ENCODE measurements at regions of chr7 and their contacts with region 1.

Region 1: DNA sequence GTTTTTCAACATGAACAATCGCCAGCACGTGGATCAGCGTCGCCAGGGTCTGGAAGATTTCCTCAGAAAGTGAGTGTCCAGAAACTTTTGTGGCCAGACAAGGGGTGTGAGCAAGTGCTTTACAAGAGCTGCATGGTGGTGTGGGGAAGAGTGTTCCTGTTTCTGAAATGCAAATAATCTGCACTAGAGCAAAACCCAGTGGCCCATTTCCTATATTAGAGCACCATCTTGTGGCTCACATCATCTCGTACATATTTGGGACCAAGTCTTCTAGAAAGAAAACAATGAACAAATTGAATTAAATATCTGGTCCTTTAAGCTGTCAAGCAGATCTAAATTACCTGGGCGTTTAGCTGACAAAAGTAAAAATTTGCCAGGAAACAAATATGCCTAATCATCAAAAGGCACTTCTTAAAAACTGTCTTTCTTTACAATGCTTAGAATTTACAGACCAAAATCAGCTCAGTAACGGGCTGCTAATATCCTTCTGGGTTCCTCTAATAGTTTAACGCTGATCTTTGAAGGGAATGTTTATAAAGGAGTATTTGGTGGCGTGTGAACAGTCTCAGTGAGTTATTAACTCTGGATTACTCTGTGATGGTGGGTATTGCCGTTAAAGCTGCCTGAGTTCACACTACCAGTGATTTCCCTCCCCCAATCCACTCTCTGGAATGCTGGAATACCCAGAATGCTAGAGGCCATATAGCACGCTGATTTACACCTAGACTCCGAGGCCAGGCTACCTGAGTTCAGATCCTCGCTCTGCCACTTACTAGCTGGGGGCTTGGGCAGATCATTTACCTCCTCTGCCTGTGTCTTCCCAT is 73.6 kb downstream of the SNX10 start:
- ATAC-seq: peak; percentile 72 to 93 (median 80)
- H3K4me3 ChIP-seq: no peak overlapping the region
- H3K27ac ChIP-seq: no peak overlapping the region
- H3K4me1 ChIP-seq: peaks cover 7 to 25% of the 10 kb centered on the region in 2 donors

Region 2: DNA sequence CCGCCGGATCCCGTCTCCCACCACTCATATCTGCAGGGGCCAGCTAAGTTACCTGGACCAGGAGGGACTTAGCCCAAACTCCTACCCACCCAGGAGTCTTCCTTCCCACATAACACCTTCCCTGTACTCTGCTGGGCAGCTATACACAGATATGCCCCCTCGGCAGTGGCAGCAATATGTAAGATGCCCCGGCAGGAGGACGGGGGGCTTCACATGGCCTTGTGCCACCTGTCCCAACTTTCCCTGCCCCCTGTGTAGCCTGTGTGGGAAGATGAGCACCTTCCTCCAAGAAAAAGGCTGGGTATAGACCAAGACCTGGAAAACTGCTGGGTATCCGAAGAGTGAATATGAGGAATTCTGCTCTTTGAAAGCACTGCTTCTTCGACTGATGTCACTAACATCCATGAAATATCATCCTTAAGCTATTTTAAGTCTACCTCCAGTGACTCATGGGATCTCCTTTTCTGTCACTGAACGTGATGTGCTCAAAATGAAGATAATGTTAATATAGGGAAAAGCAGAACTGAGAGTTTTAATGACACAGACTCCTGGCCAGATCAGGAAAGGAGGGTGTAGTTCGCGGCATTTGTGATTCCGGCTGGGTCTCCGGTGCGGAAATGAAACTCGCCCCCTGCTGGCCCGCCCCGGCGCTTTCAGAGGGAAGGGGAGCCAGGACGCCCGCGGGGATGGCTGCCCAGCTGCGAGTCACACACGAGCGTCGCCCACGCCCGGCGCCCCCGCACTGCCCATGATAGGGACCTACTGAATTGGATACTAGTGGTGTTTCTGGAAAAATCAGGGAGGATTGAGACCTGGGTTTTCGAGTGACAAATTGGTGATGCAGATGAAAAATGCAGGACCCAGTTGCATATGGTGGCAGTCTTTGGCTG is 470.1 kb before region 1 on chr7:
- in situ Hi-C with region 1: loop called in 8 of 9 experiments (anchors 5 to 25 kb)
- ATAC-seq: peak; percentile 70 to 92 (median 84)
- H3K4me3 ChIP-seq: peak overlapping the region in 1 of 5 donors; percentile 22
- H3K27ac ChIP-seq: no peak overlapping the region
- H3K4me1 ChIP-seq: peaks cover 2 to 12% of the 10 kb centered on the region in 2 donors

Region 3: DNA sequence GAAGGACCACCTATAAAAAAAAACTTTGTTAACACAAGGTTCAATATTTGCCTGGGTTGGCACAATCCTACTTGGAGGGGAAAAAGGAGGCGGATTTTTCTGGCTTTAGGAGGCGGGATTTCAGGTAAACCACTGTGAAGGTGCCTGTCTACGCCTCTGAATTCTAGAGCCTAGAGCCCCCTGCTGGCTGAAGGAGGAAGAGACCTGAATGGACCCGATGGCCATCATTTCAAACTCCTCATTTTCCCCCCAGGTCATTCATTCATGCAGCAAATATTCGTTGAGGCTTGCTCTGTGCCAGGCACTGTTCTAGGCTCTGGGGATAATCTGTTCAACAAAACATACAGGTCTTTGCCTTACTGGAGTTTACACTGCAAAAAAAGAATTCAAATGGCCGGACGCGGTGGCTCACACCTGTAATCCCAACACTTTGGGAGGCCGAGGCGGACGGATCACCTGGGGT is 303.6 kb before region 1 on chr7:
- in situ Hi-C with region 1: loop called in 1 of 9 experiments (anchors 25 kb)
- ATAC-seq: peak in 6 of 8 experiments; percentile 38 to 90 (median 69)
- H3K4me3 ChIP-seq: no peak overlapping the region
- H3K27ac ChIP-seq: no peak overlapping the region
- H3K4me1 ChIP-seq: peaks cover 5 to 10% of the 10 kb centered on the region in 2 donors

Region 4: GRCh38 chr7:26078437-26079336 is 286.6 kb before region 1 on chr7:
- in situ Hi-C with region 1: loop called in 6 of 9 experiments (anchors 25 kb)
- ATAC-seq: peak; percentile 78 to 100 (median 99)
- H3K4me3 ChIP-seq: peak overlapping the region in 2 of 5 donors; percentile 9 to 12
- H3K27ac ChIP-seq: no peak overlapping the region
- H3K4me1 ChIP-seq: peaks cover 12% of the 10 kb centered on the region in 2 donors

Region 5: GRCh38 chr7:26090927-26091519 is 274.3 kb before region 1 on chr7:
- in situ Hi-C with region 1: loop called in 6 of 9 experiments (anchors 10 to 25 kb)
- ATAC-seq: peak in 7 of 8 experiments; percentile 49 to 89 (median 71)
- H3K4me3 ChIP-seq: no peak overlapping the region
- H3K27ac ChIP-seq: no peak overlapping the region
- H3K4me1 ChIP-seq: no peaks in the 10 kb centered on the region

Region 6: DNA sequence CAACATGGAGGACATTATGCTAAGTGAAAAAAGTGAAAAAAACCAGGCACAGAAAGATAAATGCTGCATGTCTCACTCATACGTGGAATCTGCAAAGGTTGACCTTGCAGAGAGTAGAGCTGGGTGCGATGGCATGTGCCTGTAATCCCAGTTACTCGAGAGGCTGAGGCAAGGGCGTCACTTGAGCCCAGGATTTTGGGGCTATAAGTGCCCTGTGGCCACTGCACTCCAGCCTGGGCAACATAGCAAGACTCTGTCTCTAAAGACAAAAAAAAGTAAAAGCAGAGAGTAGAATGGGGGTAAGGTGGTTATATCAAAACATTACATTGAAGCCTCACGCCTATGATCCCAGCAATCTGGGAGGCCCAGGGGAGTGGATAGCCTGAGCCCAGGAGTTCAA is 140.9 kb before region 1 on chr7:
- in situ Hi-C with region 1: no loop called
- ATAC-seq: peak in 1 of 8 experiments; percentile 22
- H3K4me3 ChIP-seq: no peak overlapping the region
- H3K27ac ChIP-seq: no peak overlapping the region
- H3K4me1 ChIP-seq: no peaks in the 10 kb centered on the region

Region 7: DNA sequence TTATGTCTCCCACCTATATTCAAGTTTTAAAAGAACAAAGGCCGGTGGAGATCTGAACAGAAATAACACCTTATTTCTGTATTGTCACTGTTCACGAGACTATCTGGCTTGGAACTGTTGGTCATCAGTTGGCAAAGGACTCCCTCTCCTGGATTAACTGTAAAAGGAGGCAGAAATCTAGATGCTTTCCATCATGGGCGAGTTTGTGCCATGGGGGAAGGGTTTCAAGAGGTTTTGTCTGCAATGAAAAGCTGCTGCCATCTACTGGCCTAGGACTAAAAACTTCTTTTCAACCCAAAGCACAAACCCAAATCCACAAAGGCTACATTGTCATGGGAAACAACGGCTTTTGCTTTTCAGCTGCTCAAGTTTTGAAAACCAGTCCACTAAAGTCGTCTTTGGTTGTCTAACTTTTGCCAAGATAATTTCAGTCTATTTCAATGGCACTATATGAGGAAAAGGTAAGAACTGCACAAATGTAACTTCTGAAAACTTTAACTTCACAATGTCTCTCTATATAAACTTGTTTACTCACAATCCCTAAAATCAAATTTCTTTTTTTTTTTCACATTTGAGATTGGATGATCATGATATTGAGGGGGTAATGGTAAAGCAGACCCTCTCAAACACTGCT is 302.3 kb after region 1 on chr7:
- in situ Hi-C with region 1: loop called in 7 of 9 experiments (anchors 5 to 25 kb)
- ATAC-seq: peak; percentile 87 to 100 (median 100)
- H3K4me3 ChIP-seq: no peak overlapping the region
- H3K27ac ChIP-seq: no peak overlapping the region
- H3K4me1 ChIP-seq: peaks cover 0 to 28% of the 10 kb centered on the region in 2 donors

Region 8: GRCh38 chr7:26705567-26705966 is 340.3 kb after region 1 on chr7:
- in situ Hi-C with region 1: no loop called
- ATAC-seq: peak in 3 of 8 experiments; percentile 66 to 85 (median 82)
- H3K4me3 ChIP-seq: no peak overlapping the region
- H3K27ac ChIP-seq: no peak overlapping the region
- H3K4me1 ChIP-seq: no peaks in the 10 kb centered on the region

Region 9: DNA sequence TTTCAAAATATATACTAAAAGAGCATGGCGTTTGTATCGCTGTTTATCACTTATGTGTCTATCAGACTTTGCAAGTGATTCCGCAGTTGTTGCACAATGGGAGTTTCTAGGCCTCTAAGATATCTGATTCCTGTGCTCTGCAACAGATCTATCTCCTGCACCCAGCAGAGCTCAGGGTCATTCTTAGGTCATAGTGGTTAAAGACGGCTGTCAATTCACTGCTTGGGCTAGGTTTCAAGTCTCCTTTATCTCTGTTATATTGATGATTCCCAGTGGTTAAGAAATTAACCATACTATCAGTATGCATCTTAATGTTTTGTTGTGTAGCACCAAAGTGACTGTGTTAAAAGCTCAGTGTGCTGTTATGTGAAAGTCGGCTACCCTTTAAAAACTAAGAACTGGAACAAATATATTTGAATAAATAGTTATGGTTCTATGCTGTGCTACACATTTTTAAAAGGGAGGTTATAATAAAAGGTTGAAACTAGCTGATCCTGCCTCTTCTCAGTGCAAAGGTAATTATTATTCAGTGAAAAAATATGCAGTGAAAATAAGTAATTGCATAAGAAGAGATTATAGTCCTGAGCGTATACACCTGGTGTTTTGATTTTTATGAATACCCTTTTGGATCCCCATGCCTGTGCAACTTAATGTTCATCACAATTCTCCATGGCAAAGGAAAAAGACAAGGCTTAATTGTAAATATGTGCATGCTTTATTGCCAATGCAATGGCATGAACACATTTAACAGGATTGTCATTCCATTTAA is 706.5 kb after region 1 on chr7:
- in situ Hi-C with region 1: no loop called
- ATAC-seq: peak in 1 of 8 experiments; percentile 26
- H3K4me3 ChIP-seq: no peak overlapping the region
- H3K27ac ChIP-seq: peak overlapping the region in 1 of 2 donors; percentile 2
- H3K4me1 ChIP-seq: peaks cover 16 to 30% of the 10 kb centered on the region in 2 donors

Region 10: GRCh38 chr7:27160546-27161213 is 795.4 kb after region 1 on chr7:
- in situ Hi-C with region 1: loop called in 3 of 9 experiments (anchors 25 kb)
- ATAC-seq: peak; percentile 18 to 77 (median 64)
- H3K4me3 ChIP-seq: peak overlapping the region; percentile 34 to 55 (median 41)
- H3K27ac ChIP-seq: no peak overlapping the region
- H3K4me1 ChIP-seq: peaks cover 7% of the 10 kb centered on the region in 2 donors